PC-3 (cell line): ENCODE measurements at regions of chr19 and their contacts with region 1.

Region 1: DNA sequence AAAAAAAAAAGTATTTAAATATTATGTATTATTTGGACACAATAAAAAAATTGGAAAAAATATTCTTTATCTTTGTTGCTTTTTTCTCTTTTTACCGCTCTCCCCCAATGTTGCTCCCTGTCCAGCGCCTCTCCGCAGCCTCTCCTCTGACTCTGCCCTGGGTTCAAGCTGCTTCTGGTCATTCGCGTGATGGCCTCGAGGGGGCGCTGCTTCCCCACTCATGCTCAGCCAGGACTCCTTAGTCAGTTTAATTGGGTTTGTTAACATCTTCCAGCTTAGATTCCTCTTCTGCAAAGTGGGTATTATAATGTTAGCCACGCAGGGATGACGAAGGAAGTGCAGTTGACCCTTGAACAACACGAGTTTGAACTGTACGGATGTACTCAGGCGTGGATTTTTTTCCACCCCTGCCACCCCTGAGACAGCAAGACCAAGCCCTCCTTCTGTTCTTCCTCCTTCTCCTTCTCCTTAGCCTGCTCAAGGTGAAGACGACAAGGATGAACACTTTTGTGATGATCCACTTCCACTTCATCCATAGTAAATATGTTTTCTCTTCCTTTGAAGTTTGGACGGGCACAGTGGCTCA is 4.9 kb upstream of the NWD1 start:
- DNase-seq: peak; percentile 69
- ATAC-seq: peak; percentile 6; the same call in 1 of the 2 replicates
- H3K4me3 ChIP-seq: no peak overlapping the region
- H3K27ac ChIP-seq: no peak overlapping the region
- H3K4me1 ChIP-seq: peaks cover 17% of the 10 kb centered on the region
- H3K27me3 ChIP-seq: no peaks in the 10 kb centered on the region
- CTCF ChIP-seq: peak; percentile 96

Region 2: GRCh38 chr19:16125737-16126495 is 588.9 kb before region 1 on chr19:
- CTCF ChIA-PET with region 1: no interaction called
- POLR2A ChIA-PET with region 1: no interaction called
- intact Hi-C with region 1: no loop called
- DNase-seq: no peak
- ATAC-seq: no peak
- H3K4me3 ChIP-seq: no peak overlapping the region
- H3K27ac ChIP-seq: no peak overlapping the region
- H3K4me1 ChIP-seq: no peaks in the 10 kb centered on the region
- H3K27me3 ChIP-seq: no peaks in the 10 kb centered on the region
- CTCF ChIP-seq: no peak

Region 3: DNA sequence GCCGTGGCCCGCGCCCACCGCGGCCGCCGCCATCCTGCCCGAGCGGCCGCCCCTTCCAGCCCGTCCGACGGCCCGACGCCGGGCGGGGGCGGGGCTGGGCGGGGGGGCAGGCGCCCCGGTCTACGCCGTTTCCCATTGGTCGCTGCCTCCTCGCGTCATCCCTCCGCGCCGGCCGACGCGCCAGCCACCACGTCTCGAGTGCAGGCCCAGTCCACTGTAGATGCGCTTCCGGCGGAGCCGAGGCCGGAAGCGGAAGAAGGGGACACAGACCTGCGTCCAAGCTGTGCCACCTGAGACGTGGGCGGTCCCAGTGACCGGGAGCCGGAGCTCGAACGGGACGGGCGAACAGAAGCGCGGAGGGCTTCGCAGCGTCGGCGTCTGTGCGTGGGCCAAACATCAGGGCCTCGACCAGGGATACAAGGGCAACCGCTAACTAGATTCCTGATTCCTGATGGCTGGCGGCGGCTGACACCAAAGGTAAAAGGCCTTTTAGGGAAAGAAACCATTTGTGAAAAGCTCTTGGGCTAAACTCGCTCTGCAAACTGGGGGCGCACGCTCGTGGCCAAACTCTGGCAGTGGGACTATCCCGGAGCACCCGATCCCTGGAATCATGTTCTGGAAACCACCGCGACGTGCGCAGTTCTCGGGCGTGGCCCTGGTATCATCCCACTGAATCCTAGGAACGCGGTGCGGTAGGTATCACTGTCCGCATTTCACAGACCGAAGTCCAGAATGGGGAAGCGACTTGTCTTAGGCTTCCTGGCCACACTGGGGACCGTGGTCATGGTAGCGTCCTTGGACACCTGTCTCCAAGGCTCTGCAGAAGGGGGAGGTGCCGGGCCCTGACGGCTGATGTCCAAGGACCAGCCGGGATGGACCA is 142.2 kb before region 1 on chr19 and contains the start of gene SLC35E1:
- CTCF ChIA-PET with region 1: no interaction called
- POLR2A ChIA-PET with region 1: no interaction called
- intact Hi-C with region 1: no loop called
- DNase-seq: peak; percentile 98
- ATAC-seq: peak; percentile 95
- H3K4me3 ChIP-seq: peak within 1 kb of the TSS; percentile 91
- H3K27ac ChIP-seq: peak within 1 kb of the TSS; percentile 77
- H3K4me1 ChIP-seq: peaks cover 43% of the 10 kb centered on the region
- H3K27me3 ChIP-seq: no peaks in the 10 kb centered on the region
- CTCF ChIP-seq: no peak
- total RNA-seq, gene SLC35E1: 52.6 and 62.3 TPM in 2 replicates

Region 4: DNA sequence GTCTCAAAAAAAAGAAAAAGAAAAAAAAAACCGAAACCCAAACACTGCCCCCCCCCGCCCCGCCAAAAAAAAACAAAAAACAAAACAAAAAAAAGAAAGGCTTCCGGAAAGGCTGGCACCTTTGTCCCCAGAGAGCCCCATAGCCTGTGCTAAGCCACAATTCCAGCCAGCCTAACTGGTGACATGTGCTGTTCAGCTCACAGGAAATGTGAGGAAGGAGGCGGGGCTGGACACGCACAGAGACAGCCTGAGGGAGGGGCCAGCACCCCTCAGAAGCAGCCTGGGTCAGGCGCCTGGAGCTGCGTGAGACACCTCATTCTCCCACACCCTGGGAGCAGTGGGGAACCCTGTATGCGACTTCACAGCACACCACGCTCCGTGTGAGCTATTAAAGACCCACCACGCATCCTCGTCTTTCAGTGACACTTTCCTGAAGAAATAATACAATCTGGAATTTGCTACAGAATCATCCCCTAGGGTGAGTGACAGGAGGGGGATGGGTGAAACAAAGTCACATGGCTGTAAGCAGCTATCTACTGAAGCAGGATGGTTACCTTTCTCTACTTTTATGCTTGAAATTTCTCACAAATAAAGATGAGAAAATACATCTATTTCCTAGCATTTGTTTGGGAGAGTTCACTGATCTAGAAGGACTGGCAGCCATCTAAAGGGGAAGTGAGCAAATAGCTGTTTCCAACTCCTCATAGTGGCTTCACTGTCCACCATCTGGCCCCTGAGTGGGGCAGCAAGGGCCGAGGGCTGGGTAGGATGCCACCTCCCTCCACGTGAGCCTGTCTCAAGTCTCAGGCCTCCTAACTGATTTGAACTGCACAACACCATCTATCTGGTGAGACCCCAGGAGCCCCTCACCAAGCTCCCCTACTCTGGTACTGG is 130.3 kb before region 1 on chr19:
- CTCF ChIA-PET with region 1: interaction called, 15 read pairs
- POLR2A ChIA-PET with region 1: no interaction called
- intact Hi-C with region 1: no loop called
- DNase-seq: peak; percentile 71
- ATAC-seq: peak; percentile 94
- H3K4me3 ChIP-seq: no peak overlapping the region
- H3K27ac ChIP-seq: peak overlapping the region; percentile 4; the same call in 1 of the 2 replicates
- H3K4me1 ChIP-seq: peaks cover 15% of the 10 kb centered on the region
- H3K27me3 ChIP-seq: no peaks in the 10 kb centered on the region
- CTCF ChIP-seq: no peak

Region 5: DNA sequence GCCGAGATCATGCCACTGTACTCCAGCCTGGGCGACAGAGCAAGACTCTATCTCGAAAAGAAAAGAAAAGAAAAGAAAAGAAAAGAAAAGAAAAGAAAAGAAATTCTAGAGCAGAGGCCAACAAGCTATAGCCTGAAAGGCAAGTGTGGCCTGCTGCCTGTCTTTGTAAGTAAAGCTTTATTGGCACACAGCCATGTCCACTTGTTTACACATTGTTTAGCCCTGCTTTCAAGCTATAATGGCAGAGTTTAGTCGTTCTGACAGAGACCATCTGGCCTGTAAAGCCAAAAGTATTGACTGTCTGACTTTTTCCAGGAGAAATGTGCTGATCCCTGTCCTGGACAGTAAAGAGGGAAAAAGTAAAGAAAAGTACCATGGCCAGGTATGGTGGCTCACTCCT is 23.1 kb after region 1 on chr19:
- CTCF ChIA-PET with region 1: interaction called, 5 read pairs
- POLR2A ChIA-PET with region 1: interaction called, 15 read pairs
- intact Hi-C with region 1: no loop called
- DNase-seq: no peak
- ATAC-seq: no peak
- H3K4me3 ChIP-seq: no peak overlapping the region
- H3K27ac ChIP-seq: no peak overlapping the region
- H3K4me1 ChIP-seq: peaks cover 6% of the 10 kb centered on the region; the same call in 1 of the 2 replicates
- H3K27me3 ChIP-seq: no peaks in the 10 kb centered on the region
- CTCF ChIP-seq: no peak

Region 6: GRCh38 chr19:16771618-16772017 is 56.8 kb after region 1 on chr19:
- CTCF ChIA-PET with region 1: interaction called, 3 read pairs
- POLR2A ChIA-PET with region 1: no interaction called
- intact Hi-C with region 1: loop called (anchors 2 kb)
- DNase-seq: peak; percentile 93
- ATAC-seq: peak; percentile 90
- H3K4me3 ChIP-seq: no peak overlapping the region
- H3K27ac ChIP-seq: no peak overlapping the region
- H3K4me1 ChIP-seq: no peaks in the 10 kb centered on the region
- H3K27me3 ChIP-seq: no peaks in the 10 kb centered on the region
- CTCF ChIP-seq: peak; percentile 87

Region 7: DNA sequence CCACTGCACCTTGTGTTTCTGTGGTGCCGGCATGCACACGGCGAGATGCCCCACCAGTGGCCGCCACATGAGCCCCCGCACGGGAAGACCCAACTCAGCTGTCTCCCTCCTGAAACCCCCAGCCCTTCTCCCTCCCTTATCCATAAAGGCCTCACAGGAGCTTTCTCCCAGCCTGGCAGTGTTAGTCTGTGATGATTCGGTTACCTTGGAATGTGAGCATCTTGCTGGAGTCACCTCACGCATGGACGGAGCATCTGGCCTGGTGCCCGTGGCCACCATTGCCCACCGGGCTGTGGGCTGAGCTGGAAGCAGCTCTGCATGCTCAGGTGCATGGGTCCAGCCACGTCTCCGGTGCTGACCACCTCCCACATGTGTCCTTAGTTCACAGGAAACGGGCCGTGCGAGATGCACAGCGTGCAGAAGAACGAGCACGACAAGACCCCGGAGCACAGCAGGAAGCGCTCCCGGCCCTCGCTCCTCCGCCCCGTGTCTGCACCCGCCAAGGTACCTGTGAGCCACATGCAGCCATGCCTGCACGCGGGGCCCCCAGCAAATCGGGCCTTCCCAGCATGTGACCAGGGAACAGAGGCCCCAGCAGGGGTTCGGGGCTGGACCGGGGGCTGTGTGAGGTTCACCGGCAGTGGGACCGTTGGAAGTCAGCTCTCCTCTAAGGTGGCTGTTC is 136.4 kb after region 1 on chr19:
- CTCF ChIA-PET with region 1: no interaction called
- POLR2A ChIA-PET with region 1: no interaction called
- intact Hi-C with region 1: loop called (anchors 2 kb)
- DNase-seq: peak; percentile 87
- ATAC-seq: peak; percentile 29
- H3K4me3 ChIP-seq: peak overlapping the region; percentile 1; the same call in 1 of the 2 replicates
- H3K27ac ChIP-seq: peak overlapping the region; percentile 97
- H3K4me1 ChIP-seq: peaks cover 36% of the 10 kb centered on the region
- H3K27me3 ChIP-seq: no peaks in the 10 kb centered on the region
- CTCF ChIP-seq: no peak

Region 8: DNA sequence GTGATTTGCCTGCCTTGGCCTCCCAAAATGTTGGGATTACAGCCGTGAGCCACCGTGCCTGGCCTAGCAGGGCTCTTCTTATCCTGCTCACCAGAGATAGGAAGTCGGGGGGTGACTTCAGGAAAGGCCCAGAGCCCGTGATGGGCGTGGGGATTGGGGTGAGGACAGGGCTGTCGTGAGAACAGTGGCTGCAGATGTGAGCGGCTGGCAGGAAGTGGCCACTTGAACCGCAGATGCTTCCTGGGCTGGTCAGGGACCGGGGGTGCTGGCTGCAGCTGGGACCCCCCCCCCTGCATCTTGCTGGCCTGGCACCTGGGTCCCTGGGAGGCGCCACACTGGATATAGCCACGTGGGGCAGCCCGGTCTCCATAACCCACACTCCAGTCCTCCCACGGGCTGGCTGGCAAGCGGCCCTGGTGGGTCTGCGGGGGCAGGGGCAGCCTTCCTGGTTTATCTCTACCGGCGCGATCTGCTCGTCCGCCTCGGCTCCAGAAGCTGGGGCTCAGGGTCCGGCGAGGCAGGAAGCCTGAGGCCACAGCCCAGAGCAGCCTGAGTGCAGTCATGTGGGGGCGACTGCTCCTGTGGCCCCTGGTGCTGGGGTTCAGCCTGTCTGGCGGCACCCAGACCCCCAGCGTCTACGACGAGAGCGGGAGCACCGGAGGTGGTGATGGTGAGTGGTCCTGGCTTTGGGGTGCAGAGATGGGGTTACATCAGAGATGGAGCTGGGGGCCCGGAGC is 174.0 kb after region 1 on chr19 and contains the start of gene F2RL3:
- CTCF ChIA-PET with region 1: no interaction called
- POLR2A ChIA-PET with region 1: no interaction called
- intact Hi-C with region 1: loop called (anchors 5 kb)
- DNase-seq: no peak
- ATAC-seq: no peak
- H3K4me3 ChIP-seq: no peak within 1 kb of the TSS
- H3K27ac ChIP-seq: no peak within 1 kb of the TSS
- H3K4me1 ChIP-seq: 0 out of 2 replicates have a peak, but pooled peaks cover 4% of the 10 kb centered on the region
- H3K27me3 ChIP-seq: no peaks in the 10 kb centered on the region
- CTCF ChIP-seq: no peak
- total RNA-seq, gene F2RL3: 0.07 and 0.23 TPM in 2 replicates

Region 9: GRCh38 chr19:17052439-17053210 is 337.8 kb after region 1 on chr19:
- CTCF ChIA-PET with region 1: no interaction called
- POLR2A ChIA-PET with region 1: no interaction called
- intact Hi-C with region 1: loop called (anchors 1 kb)
- DNase-seq: peak; percentile 71
- ATAC-seq: no peak
- H3K4me3 ChIP-seq: no peak overlapping the region
- H3K27ac ChIP-seq: no peak overlapping the region
- H3K4me1 ChIP-seq: peaks cover 10% of the 10 kb centered on the region
- H3K27me3 ChIP-seq: no peaks in the 10 kb centered on the region
- CTCF ChIP-seq: peak; percentile 75